Caco-2 (cell line): ENCODE measurements at regions of chrX and their contacts with region 1.

Region 1: DNA sequence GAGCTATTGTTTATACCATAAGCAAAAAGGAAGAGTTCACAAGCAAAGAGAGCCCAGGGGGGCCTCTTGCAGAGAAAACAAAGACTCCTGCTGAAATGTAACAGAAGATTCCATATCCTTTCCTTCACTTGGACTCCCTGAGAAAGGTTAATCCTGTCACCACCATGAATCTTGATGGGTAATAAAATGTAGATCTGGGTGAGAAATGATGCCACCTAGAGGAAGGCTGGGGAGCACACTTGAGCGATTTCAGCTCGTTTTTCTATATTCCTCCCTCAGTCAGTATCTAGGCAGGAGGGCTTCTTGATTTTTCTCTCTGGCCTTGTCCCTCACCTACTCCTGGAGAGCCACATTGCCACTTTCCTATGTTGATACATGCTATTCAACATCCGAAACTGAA is 10.2 kb upstream of the KCNE5 start:
- DNase-seq: peak in 1 of 2 experiments; percentile 11
- H3K4me3 ChIP-seq: no peak overlapping the region
- H3K4me3 Mint-ChIP-seq: no peak overlapping the region
- H3K27ac Mint-ChIP-seq: no peak overlapping the region
- H3K4me1 ChIP-seq: no peaks in the 10 kb centered on the region
- H3K4me1 Mint-ChIP-seq: no peaks in the 10 kb centered on the region
- H3K27me3 ChIP-seq: no peaks in the 10 kb centered on the region
- H3K27me3 Mint-ChIP-seq: no peaks in the 10 kb centered on the region
- CTCF ChIP-seq: peak; percentile 34 to 52

Region 2: GRCh38 chrX:109485470-109486340 is 149.5 kb before region 1 on chrX:
- CTCF ChIA-PET with region 1: interaction called, 12 read pairs
- POLR2A ChIA-PET with region 1: no interaction called
- intact Hi-C with region 1: loop called (anchors 1 kb)
- DNase-seq: peak; percentile 46 to 52
- H3K4me3 ChIP-seq: no peak overlapping the region
- H3K4me3 Mint-ChIP-seq: no peak overlapping the region
- H3K27ac Mint-ChIP-seq: no peak overlapping the region
- H3K4me1 ChIP-seq: no peaks in the 10 kb centered on the region
- H3K4me1 Mint-ChIP-seq: no peaks in the 10 kb centered on the region
- H3K27me3 ChIP-seq: no peaks in the 10 kb centered on the region
- H3K27me3 Mint-ChIP-seq: peaks cover 8% of the 10 kb centered on the region
- CTCF ChIP-seq: peak; percentile 90 to 91

Region 3: DNA sequence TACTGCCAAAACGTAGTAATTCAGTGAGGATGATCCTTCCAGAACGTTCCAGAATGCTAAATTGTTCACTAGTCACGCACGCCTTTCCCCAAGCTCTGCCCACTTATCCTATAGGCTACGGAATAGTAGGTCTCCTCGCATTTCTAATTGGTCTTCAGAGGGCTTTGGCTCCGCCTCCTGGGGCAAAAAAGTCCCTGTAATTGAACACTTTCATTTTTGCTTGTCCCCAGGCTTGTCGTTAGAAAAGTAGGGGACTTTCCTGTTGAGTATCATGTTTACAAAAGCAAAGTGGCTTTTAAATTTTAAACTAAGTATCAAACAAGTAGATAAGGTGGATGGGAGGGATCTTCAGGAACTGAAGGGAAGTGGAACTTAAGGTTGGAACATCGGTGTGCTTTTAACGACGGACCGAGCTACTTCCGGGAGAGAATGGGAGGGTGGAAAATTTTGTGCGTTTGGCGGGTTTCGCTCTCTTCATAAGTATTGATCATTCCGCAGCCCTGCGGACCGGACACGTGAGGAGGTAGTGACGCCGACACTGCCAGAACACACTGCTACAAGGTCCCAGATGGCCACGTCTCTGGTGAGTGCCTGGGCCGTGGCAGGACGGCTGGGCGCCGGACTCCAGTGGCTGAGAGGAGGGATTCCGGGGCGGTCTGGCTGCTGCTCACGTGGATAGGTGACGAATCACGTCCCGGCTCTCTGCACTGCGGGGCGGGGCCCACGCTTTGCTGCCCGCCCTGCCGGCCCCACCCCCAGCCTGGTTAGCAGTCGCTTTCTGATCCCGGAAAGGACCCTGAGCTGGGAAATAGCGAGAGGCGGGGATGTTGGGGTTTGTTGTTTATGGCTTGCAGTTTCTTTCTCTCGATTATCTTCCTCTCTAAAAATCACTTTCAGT is 98.5 kb before region 1 on chrX and contains the start of gene NXT2:
- CTCF ChIA-PET with region 1: interaction called, 3 read pairs
- POLR2A ChIA-PET with region 1: interaction called, 3 read pairs
- intact Hi-C with region 1: loop called (anchors 5 kb)
- DNase-seq: peak; percentile 91 to 92
- H3K4me3 ChIP-seq: peak within 1 kb of the TSS; percentile 79
- H3K4me3 Mint-ChIP-seq: peak within 1 kb of the TSS; percentile 96
- H3K27ac Mint-ChIP-seq: peak within 1 kb of the TSS; percentile 99
- H3K4me1 ChIP-seq: 0 out of 2 replicates have a peak, but pooled peaks cover 3% of the 10 kb centered on the region
- H3K4me1 Mint-ChIP-seq: no peaks in the 10 kb centered on the region
- H3K27me3 ChIP-seq: no peaks in the 10 kb centered on the region
- H3K27me3 Mint-ChIP-seq: peaks cover 7% of the 10 kb centered on the region
- CTCF ChIP-seq: no peak
- total RNA-seq, gene NXT2: 9.7 and 9.8 TPM in 2 replicates

Region 4: GRCh38 chrX:109667986-109668385 is 32.8 kb after region 1 on chrX:
- CTCF ChIA-PET with region 1: no interaction called
- POLR2A ChIA-PET with region 1: no interaction called
- intact Hi-C with region 1: no loop called
- DNase-seq: no peak
- H3K4me3 ChIP-seq: no peak overlapping the region
- H3K4me3 Mint-ChIP-seq: no peak overlapping the region
- H3K27ac Mint-ChIP-seq: no peak overlapping the region
- H3K4me1 ChIP-seq: no peaks in the 10 kb centered on the region
- H3K4me1 Mint-ChIP-seq: no peaks in the 10 kb centered on the region
- H3K27me3 ChIP-seq: no peaks in the 10 kb centered on the region
- H3K27me3 Mint-ChIP-seq: no peaks in the 10 kb centered on the region
- CTCF ChIP-seq: no peak

Region 5: GRCh38 chrX:109890895-109891502 is 255.8 kb after region 1 on chrX:
- CTCF ChIA-PET with region 1: interaction called, 4 read pairs
- POLR2A ChIA-PET with region 1: no interaction called
- intact Hi-C with region 1: loop called (anchors 2 kb)
- DNase-seq: peak; percentile 58 to 60
- H3K4me3 ChIP-seq: no peak overlapping the region
- H3K4me3 Mint-ChIP-seq: no peak overlapping the region
- H3K27ac Mint-ChIP-seq: no peak overlapping the region
- H3K4me1 ChIP-seq: no peaks in the 10 kb centered on the region
- H3K4me1 Mint-ChIP-seq: no peaks in the 10 kb centered on the region
- H3K27me3 ChIP-seq: no peaks in the 10 kb centered on the region
- H3K27me3 Mint-ChIP-seq: no peaks in the 10 kb centered on the region
- CTCF ChIP-seq: peak; percentile 65 to 73